ENCODE measurements at regions of chr11 and their contacts with region 1.

Region 1: GRCh38 chr11:6389921-6390724 is at the start of gene SMPD1:
- DNase-seq: peak; percentile 96
- H3K4me3 Mint-ChIP-seq: peak within 1 kb of the TSS; percentile 85
- H3K27ac Mint-ChIP-seq: peak within 1 kb of the TSS; percentile 94
- H3K4me1 Mint-ChIP-seq: peaks cover 45% of the 10 kb centered on the region
- H3K27me3 Mint-ChIP-seq: no peaks in the 10 kb centered on the region
- total RNA-seq, gene SMPD1: 23.4 to 23.8 TPM

Region 2: DNA sequence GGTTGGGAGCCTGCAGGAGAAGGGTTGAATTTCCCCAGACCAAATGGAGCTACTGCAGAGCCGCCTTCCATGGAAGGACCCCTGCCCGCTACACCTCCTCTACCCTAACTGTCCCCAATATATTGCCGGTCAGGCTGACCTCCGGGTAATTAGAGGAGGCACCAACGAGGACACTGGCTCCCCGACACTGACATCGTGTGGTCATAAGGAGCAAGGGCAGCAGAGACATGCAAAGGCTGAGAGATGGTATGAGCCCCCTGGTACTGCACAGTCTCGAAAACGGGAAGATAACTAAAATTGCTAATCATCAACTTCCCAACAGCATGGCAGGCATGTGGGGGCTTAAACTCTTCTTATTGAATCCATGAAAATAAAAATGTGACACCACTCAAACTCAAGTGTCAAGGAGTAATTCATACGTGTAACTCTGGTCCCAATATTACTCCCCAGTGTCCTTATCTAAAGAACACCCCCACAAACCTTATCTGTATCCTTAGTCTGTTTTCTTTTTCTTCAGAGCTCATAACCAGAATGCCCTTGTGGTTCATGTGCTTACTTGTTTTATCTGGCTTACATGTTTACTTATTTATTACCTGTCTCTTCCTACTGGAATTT is 74.2 kb before region 1 on chr11:
- CTCF ChIA-PET with region 1: no interaction called
- POLR2A ChIA-PET with region 1: no interaction called
- intact Hi-C with region 1: loop called (anchors 2 kb)
- DNase-seq: peak; percentile 53
- H3K4me3 Mint-ChIP-seq: no peak overlapping the region
- H3K27ac Mint-ChIP-seq: no peak overlapping the region
- H3K4me1 Mint-ChIP-seq: peaks cover 16% of the 10 kb centered on the region
- H3K27me3 Mint-ChIP-seq: peaks cover 32% of the 10 kb centered on the region

Region 3: GRCh38 chr11:6413791-6414201 is 23.7 kb after region 1 on chr11:
- CTCF ChIA-PET with region 1: interaction called, 4 read pairs
- POLR2A ChIA-PET with region 1: interaction called, 18 read pairs
- intact Hi-C with region 1: loop called (anchors 1 kb)
- DNase-seq: peak; percentile 84
- H3K4me3 Mint-ChIP-seq: no peak overlapping the region
- H3K27ac Mint-ChIP-seq: no peak overlapping the region
- H3K4me1 Mint-ChIP-seq: peaks cover 15% of the 10 kb centered on the region
- H3K27me3 Mint-ChIP-seq: no peaks in the 10 kb centered on the region

Region 4: DNA sequence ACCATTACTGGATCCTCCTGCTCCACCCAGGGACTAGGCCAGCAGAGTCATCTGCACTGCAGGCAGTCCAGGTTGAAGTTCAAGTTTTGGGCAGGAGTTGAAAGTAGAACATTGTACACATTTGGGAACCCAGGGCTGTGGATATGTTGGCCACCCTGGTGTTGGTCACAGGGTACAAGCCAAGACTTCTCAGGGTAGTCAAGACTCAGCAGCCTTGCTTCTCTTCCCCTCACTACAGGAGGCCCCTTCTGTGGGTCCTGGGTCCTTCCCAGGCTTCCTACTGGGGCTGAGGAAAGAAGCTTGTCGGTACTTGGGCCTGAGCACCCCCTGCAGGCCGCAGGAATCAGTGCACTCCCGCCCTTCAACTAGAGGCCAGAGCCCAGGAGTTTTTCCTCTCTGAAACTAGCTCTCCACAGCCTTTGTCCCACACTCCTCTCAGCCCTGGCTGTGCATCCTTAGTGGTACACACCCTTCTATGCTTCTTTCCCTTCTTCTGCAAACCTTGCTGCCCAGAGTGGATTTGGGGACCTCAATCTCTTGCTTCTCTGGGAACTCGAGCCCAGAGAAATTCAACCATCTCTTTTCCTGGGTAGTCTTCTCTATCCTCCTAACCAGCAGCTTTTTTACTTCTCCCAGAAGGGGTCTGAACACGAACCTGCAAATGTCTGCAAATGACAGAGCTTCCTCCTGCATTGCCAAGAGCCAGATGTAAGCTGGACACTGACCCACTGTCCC is 53.3 kb after region 1 on chr11:
- CTCF ChIA-PET with region 1: interaction called, 661 read pairs
- POLR2A ChIA-PET with region 1: interaction called, 4 read pairs
- intact Hi-C with region 1: loop called (anchors 2 kb)
- DNase-seq: peak; percentile 66
- H3K4me3 Mint-ChIP-seq: no peak overlapping the region
- H3K27ac Mint-ChIP-seq: no peak overlapping the region
- H3K4me1 Mint-ChIP-seq: no peaks in the 10 kb centered on the region
- H3K27me3 Mint-ChIP-seq: no peaks in the 10 kb centered on the region

Region 5: DNA sequence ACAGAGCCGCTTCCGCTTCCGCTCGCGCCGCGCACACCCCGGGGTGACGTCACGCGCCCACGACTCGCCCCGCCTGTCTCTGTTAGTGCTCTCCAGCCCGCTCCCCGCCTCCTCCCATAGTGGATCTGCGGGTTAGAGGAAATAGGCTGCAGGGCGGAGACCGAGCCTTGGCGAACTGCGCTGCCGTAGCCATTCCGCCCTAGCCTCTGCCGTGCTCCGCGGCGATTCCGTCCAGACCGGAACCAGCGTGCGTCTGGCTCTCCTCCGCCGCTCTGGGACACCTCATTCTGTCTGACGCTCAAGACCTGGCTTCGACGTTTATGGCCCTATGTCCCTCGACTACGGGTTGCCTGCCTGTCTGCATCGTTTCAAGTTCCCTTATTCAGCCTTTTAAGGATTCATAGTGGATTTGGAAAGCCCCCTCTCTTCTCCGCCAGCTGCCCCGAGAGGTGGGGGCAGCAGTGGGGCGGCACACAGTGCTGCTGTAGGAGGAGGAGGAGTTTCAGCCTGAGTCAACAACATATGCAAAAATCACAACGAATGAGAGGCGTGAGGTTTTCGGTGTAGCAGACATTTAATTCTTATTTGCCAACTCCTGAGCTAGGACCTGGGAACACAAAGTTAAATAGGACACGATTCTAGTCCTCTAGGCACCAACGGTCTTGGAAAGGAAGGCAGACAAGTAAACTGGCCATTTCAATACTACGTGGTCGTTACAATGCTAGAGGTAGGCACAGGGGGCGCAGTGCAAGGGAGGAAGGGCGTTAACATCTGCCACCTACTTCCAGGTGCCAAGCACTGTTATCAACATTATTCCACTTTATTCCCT is 222.3 kb after region 1 on chr11 and contains the start of gene TAF10:
- CTCF ChIA-PET with region 1: interaction called, 3 read pairs
- POLR2A ChIA-PET with region 1: interaction called, 5 read pairs
- intact Hi-C with region 1: loop called (anchors 2 kb)
- DNase-seq: peak; percentile 96
- H3K4me3 Mint-ChIP-seq: peak within 1 kb of the TSS; percentile 86
- H3K27ac Mint-ChIP-seq: peak within 1 kb of the TSS; percentile 92
- H3K4me1 Mint-ChIP-seq: peaks cover 10% of the 10 kb centered on the region
- H3K27me3 Mint-ChIP-seq: no peaks in the 10 kb centered on the region
- total RNA-seq, gene TAF10: 158 to 165 TPM

Region 6: GRCh38 chr11:6693342-6694228 is 303.5 kb after region 1 on chr11:
- CTCF ChIA-PET with region 1: no interaction called
- POLR2A ChIA-PET with region 1: no interaction called
- intact Hi-C with region 1: loop called (anchors 1 kb)
- DNase-seq: peak; percentile 83
- H3K4me3 Mint-ChIP-seq: peak overlapping the region; percentile 4
- H3K27ac Mint-ChIP-seq: peak overlapping the region; percentile 72
- H3K4me1 Mint-ChIP-seq: peaks cover 42% of the 10 kb centered on the region
- H3K27me3 Mint-ChIP-seq: no peaks in the 10 kb centered on the region

Measured in activated CD4-positive, alpha-beta memory T cell treated with anti-CD3 and anti-CD28 coated beads for 36 hours (primary cell).